ENCODE measurements at regions of chr5 and their contacts with region 1.

Region 1: GRCh38 chr5:170623576-170624181 is 119.9 kb downstream of the KCNIP1 start:
- DNase-seq: peak; percentile 20
- ATAC-seq: peak; percentile 85
- H3K4me3 ChIP-seq: no peak overlapping the region
- H3K27ac ChIP-seq: no peak overlapping the region
- H3K4me1 ChIP-seq: no peaks in the 10 kb centered on the region
- H3K27me3 ChIP-seq: peaks cover 0 to under 1% of the 10 kb centered on the region in 2 experiments; a peak in 1 of 5 replicates
- CTCF ChIP-seq: peak; percentile 77
- EP300 ChIP-seq: no peak
- POLR2A ChIP-seq: no peak
- RAD21 ChIP-seq: no peak

Region 2: GRCh38 chr5:170434966-170435605 is 188.6 kb before region 1 on chr5:
- CTCF ChIA-PET with region 1: interaction called, 14 read pairs
- POLR2A ChIA-PET with region 1: no interaction called
- in situ Hi-C with region 1: loop called (anchors 5 kb)
- intact Hi-C with region 1: no loop called
- DNase-seq: peak; percentile 11
- ATAC-seq: peak; percentile 92
- H3K4me3 ChIP-seq: no peak overlapping the region
- H3K27ac ChIP-seq: no peak overlapping the region
- H3K4me1 ChIP-seq: no peaks in the 10 kb centered on the region
- H3K27me3 ChIP-seq: peaks cover 0 to 37% of the 10 kb centered on the region in 2 experiments; a peak in 4 of 5 replicates
- CTCF ChIP-seq: peak; percentile 87
- EP300 ChIP-seq: no peak
- POLR2A ChIP-seq: no peak
- RAD21 ChIP-seq: peak; percentile 71

Measured in HepG2 (cell line).